Activated CD4-positive, alpha-beta memory T cell treated with anti-CD3 and anti-CD28 coated beads, Interleukin-2, amount 10 ng/mL, durations not matched to agents 7 days and 5 days (primary cell): ENCODE measurements at regions of chr1 and their contacts with region 1.

Region 1: GRCh38 chr1:23825076-23825761 is at the start of gene HMGCL:
- DNase-seq: peak; percentile 91
- H3K4me3 Mint-ChIP-seq: peak within 1 kb of the TSS; percentile 94
- H3K27ac Mint-ChIP-seq: peak within 1 kb of the TSS; percentile 87
- H3K4me1 Mint-ChIP-seq: peaks cover 25% of the 10 kb centered on the region
- H3K27me3 Mint-ChIP-seq: no peaks in the 10 kb centered on the region
- total RNA-seq, gene HMGCL: 33.5 to 35.7 TPM

Region 2: DNA sequence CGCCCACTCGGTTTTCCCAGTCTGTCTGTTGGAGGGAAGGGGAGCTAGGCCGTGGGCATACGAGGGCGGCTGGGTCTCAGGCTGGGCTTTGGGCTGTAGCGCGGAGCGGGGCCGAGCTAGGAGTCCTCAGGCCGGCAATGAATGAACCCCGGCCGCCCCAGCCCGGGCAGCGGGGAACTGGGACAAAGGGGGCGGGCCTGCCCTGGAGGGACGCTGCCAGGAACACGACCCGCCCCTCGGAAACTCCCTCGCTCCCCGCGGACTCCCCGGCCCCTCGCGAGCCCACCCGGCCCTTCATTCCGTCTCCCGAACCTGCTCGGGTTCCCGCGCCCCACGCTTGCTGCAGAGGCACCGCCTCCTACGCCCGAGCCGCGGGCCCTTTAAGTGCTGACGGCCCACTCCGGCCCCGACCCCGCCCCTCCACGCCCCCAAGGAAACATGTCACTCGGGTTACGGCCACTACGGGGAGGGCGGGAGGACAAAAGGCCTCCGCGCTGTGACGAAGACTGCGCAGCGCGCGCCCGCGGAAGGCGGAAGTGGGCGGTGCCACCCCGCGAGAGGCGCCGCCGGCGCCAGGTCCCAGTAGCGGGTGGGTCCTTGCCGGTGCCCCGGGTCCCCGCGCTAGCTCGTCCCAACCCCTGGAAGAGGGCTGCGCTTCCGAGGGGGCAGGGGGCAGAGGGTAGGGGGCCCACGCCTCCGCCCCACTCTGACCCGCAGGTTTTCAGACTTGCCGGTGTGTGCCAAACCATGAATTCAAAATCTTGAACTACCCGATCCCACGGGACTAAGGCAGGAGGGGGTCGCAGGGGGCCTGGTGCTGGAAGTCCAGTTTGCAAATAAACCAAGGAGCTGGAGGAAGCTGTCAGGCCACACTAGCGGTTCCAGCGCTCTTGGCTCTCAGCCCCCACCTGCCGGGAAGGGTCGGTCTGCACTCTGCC is 24.6 kb before region 1 on chr1 and contains the start of gene GALE:
- CTCF ChIA-PET with region 1: interaction called, 4 read pairs
- POLR2A ChIA-PET with region 1: interaction called, 34 read pairs
- DNase-seq: peak; percentile 98
- H3K4me3 Mint-ChIP-seq: peak within 1 kb of the TSS; percentile 96
- H3K27ac Mint-ChIP-seq: peak within 1 kb of the TSS; percentile 95
- H3K4me1 Mint-ChIP-seq: peaks cover 25% of the 10 kb centered on the region
- H3K27me3 Mint-ChIP-seq: no peaks in the 10 kb centered on the region
- total RNA-seq, gene GALE: 33.5 to 37.6 TPM

Region 3: GRCh38 chr1:23845163-23845562 is 19.9 kb after region 1 on chr1:
- CTCF ChIA-PET with region 1: no interaction called
- POLR2A ChIA-PET with region 1: no interaction called
- DNase-seq: no peak
- H3K4me3 Mint-ChIP-seq: no peak overlapping the region
- H3K27ac Mint-ChIP-seq: no peak overlapping the region
- H3K4me1 Mint-ChIP-seq: no peaks in the 10 kb centered on the region
- H3K27me3 Mint-ChIP-seq: peaks cover 7% of the 10 kb centered on the region